ENCODE measurements at regions of chr1 and their contacts with region 1.

Region 1: GRCh38 chr1:183956559-183957188 is 80.9 kb downstream of the COLGALT2 start:
- DNase-seq: peak in 8 of 9 donors; percentile 60 to 82 (median 71)
- ATAC-seq: peak; percentile 99
- H3K4me3 ChIP-seq: no peak overlapping the region
- H3K4me3 Mint-ChIP-seq: peak overlapping the region in 8 of 10 donors; percentile 10 to 76 (median 30)
- H3K27ac ChIP-seq: peak overlapping the region; percentile 15
- H3K27ac Mint-ChIP-seq: no peak overlapping the region
- H3K4me1 ChIP-seq: peaks cover 17 to 36% of the 10 kb centered on the region in 2 donors
- H3K4me1 Mint-ChIP-seq: peaks cover 0 to 13% (median 9%) of the 10 kb centered on the region in 7 donors
- H3K27me3 ChIP-seq: no peaks in the 10 kb centered on the region
- H3K27me3 Mint-ChIP-seq: no peaks in the 10 kb centered on the region

Region 2: DNA sequence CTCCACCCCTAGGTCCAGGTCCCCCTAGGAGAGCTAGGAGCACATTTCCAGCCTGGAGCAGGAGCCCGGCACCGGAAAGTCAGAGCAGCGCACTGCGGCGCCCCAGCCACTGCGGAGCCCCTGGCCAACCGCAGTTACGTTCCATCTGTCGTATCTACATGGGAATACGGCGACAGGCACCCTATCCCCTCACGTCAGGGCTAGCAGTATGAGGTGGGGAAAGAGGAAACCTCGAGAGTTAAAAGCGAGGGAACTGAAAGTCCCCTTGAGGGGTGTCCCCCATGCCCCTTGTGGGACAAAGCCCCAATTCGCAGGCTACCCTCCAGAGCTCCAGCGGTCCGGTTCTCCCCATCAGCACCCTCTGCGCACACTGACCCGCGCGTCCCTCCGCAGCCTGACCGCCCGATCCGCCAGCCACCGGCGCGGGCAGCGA is 79.9 kb after region 1 on chr1:
- CTCF ChIA-PET with region 1: no interaction called
- POLR2A ChIA-PET with region 1: no interaction called
- intact Hi-C with region 1: loop called (anchors 1 to 5 kb)
- DNase-seq: peak in 3 of 9 donors; percentile 5 to 24 (median 6)
- ATAC-seq: peak; percentile 30
- H3K4me3 ChIP-seq: peak overlapping the region; percentile 47
- H3K4me3 Mint-ChIP-seq: peak overlapping the region; percentile 35 to 75 (median 64)
- H3K27ac ChIP-seq: no peak overlapping the region
- H3K27ac Mint-ChIP-seq: no peak overlapping the region
- H3K4me1 ChIP-seq: peaks cover 6 to 18% of the 10 kb centered on the region in 2 donors
- H3K4me1 Mint-ChIP-seq: peaks cover 10 to 18% (median 15%) of the 10 kb centered on the region in 7 donors
- H3K27me3 ChIP-seq: peaks cover 0 to 3% of the 10 kb centered on the region in 2 donors
- H3K27me3 Mint-ChIP-seq: peaks cover 62 to 83% (median 70%) of the 10 kb centered on the region in 5 donors

Region 3: GRCh38 chr1:184051485-184052193 is 95.0 kb after region 1 on chr1 and contains the start of gene TSEN15:
- CTCF ChIA-PET with region 1: interaction called, 3 read pairs
- POLR2A ChIA-PET with region 1: interaction called, 11 read pairs
- intact Hi-C with region 1: loop called (anchors 1 kb)
- DNase-seq: peak; percentile 54 to 75 (median 68)
- ATAC-seq: peak; percentile 98
- H3K4me3 ChIP-seq: peak within 1 kb of the TSS; percentile 87
- H3K4me3 Mint-ChIP-seq: peak within 1 kb of the TSS; percentile 91 to 99 (median 98)
- H3K27ac ChIP-seq: peak within 1 kb of the TSS; percentile 77
- H3K27ac Mint-ChIP-seq: peak within 1 kb of the TSS; percentile 89 to 99 (median 95)
- H3K4me1 ChIP-seq: peaks cover 19 to 23% of the 10 kb centered on the region in 2 donors
- H3K4me1 Mint-ChIP-seq: peaks cover 18 to 56% (median 45%) of the 10 kb centered on the region in 7 donors
- H3K27me3 ChIP-seq: peaks cover 0 to 3% of the 10 kb centered on the region in 2 donors
- H3K27me3 Mint-ChIP-seq: peaks cover 13 to 33% (median 20%) of the 10 kb centered on the region in 5 donors
- total RNA-seq, gene TSEN15: 12.7 to 48.9 (median 31.1) TPM

Region 4: DNA sequence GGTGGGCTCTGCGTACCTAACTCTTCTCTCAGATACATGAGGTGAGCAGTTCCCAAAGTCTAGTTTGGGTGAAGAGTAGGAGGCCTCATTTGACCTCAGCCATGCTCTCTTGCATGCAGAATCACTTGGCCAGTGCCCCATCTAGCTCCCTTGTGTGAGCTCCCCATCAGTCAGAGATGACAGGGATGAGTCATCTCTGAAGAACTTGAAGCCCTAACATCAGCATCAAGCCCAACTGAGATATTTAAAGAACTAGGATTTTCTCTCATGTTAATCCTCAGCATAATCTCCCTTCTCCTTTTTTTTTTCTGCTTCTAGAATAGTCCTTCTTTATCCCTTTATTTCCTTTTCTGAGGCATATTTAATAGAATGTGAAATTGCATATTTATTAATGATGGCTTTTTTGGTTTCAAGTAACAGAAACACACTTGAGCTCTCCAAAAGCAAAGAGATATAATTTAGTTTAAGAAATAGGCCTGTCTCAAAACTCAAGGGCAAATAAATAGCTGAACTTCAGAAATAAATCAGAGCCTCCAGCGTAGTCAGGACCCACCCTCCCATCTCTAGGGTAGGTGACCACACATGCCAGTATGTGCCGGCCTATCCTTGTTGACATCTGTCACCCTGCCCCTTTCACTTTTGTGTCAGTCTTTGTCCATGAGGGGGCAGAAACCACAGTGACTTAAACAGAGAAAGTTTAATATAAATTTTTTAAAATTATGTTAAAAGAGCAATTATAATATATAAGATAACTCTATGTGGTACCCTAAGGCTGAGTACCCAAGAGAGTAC is 207.2 kb after region 1 on chr1:
- CTCF ChIA-PET with region 1: no interaction called
- POLR2A ChIA-PET with region 1: no interaction called
- intact Hi-C with region 1: loop called in 1 of 2 experiments (anchors 10 kb)
- DNase-seq: no peak
- ATAC-seq: no peak
- H3K4me3 ChIP-seq: no peak overlapping the region
- H3K4me3 Mint-ChIP-seq: no peak overlapping the region
- H3K27ac ChIP-seq: no peak overlapping the region
- H3K27ac Mint-ChIP-seq: peak overlapping the region in 1 of 9 donors; percentile 13
- H3K4me1 ChIP-seq: no peaks in the 10 kb centered on the region
- H3K4me1 Mint-ChIP-seq: peaks cover 0 to 2% (median 0%) of the 10 kb centered on the region in 7 donors
- H3K27me3 ChIP-seq: no peaks in the 10 kb centered on the region
- H3K27me3 Mint-ChIP-seq: peaks cover 2 to 8% (median 7%) of the 10 kb centered on the region in 5 donors

Region 5: DNA sequence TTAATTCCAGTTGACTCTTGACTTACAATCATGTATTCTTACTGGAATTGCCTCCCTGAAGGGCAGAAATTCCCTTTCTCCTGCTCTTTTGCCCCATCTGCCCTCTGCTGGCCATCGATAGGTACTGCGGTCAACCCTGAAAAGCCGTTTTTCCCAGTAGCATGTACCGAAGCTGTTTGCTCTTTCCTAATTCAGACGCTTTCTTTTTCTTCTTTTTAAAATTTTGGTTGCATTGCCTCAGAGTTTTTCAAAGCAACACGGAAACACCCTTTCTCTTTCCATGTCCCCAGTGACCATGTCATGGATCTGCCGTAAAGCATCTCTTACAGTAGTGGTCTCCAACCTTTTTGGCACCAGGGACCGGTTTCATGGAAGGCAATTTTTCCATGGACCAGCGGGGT is 266.0 kb after region 1 on chr1:
- CTCF ChIA-PET with region 1: interaction called, 7 read pairs
- POLR2A ChIA-PET with region 1: no interaction called
- intact Hi-C with region 1: loop called (anchors 1 to 2 kb)
- DNase-seq: peak in 6 of 9 donors; percentile 11 to 31 (median 26)
- ATAC-seq: peak; percentile 60
- H3K4me3 ChIP-seq: no peak overlapping the region
- H3K4me3 Mint-ChIP-seq: peak overlapping the region in 2 of 10 donors; percentile 3 to 5
- H3K27ac ChIP-seq: no peak overlapping the region
- H3K27ac Mint-ChIP-seq: peak overlapping the region in 1 of 9 donors; percentile 6
- H3K4me1 ChIP-seq: no peaks in the 10 kb centered on the region
- H3K4me1 Mint-ChIP-seq: peaks cover 0 to 4% (median 0%) of the 10 kb centered on the region in 7 donors
- H3K27me3 ChIP-seq: no peaks in the 10 kb centered on the region
- H3K27me3 Mint-ChIP-seq: peaks cover 0 to 19% (median 9%) of the 10 kb centered on the region in 5 donors

Region 6: GRCh38 chr1:184386312-184387068 is 429.8 kb after region 1 on chr1 and contains the start of gene C1orf21:
- CTCF ChIA-PET with region 1: no interaction called
- POLR2A ChIA-PET with region 1: no interaction called
- intact Hi-C with region 1: loop called in 1 of 2 experiments (anchors 5 kb)
- DNase-seq: peak in 8 of 9 donors; percentile 11 to 87 (median 37)
- ATAC-seq: peak; percentile 86
- H3K4me3 ChIP-seq: peak within 1 kb of the TSS; percentile 56
- H3K4me3 Mint-ChIP-seq: peak within 1 kb of the TSS; percentile 67 to 90 (median 82)
- H3K27ac ChIP-seq: no peak within 1 kb of the TSS
- H3K27ac Mint-ChIP-seq: peak within 1 kb of the TSS in 2 of 9 donors; percentile 41 to 59
- H3K4me1 ChIP-seq: no peaks in the 10 kb centered on the region
- H3K4me1 Mint-ChIP-seq: peaks cover 8 to 27% (median 22%) of the 10 kb centered on the region in 7 donors
- H3K27me3 ChIP-seq: peaks cover 0 to 3% of the 10 kb centered on the region in 2 donors
- H3K27me3 Mint-ChIP-seq: peaks cover 51 to 85% (median 54%) of the 10 kb centered on the region in 5 donors
- total RNA-seq, gene C1orf21: 0.46 to 8.5 (median 1.7) TPM

Measured in naive thymus-derived CD4-positive, alpha-beta T cell (primary cell).